ENCODE measurements at regions of chrX and their contacts with region 1.

Region 1: DNA sequence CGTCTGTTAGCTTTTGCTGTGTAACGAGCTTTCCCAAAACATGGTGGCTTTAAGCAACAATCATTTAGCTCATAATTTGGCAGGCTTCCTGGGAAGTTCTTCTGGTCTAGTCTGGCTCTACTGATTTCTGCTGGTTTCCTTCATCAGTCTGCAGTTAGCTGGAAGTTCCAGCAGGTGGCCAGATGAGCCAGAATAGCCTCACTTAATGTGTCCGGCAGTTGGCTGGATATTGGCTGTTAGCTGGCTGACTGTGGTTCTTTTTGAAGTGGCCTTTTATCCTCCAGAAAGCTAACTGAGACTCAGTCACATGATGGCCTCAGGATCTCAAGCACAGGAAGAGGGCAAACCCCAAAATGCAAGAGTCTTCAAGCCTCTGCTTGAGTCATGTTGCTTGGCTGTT is 34.9 kb downstream of the FTHL17 start:
- DNase-seq: peak; percentile 42
- ATAC-seq: peak; percentile 86
- H3K4me3 ChIP-seq: no peak overlapping the region
- H3K27ac ChIP-seq: no peak overlapping the region
- H3K4me1 ChIP-seq: no peaks in the 10 kb centered on the region
- H3K27me3 ChIP-seq: no peaks in the 10 kb centered on the region
- CTCF ChIP-seq: peak; percentile 61
- POLR2A ChIP-seq: no peak
- RAD21 ChIP-seq: peak; percentile 61

Region 2: DNA sequence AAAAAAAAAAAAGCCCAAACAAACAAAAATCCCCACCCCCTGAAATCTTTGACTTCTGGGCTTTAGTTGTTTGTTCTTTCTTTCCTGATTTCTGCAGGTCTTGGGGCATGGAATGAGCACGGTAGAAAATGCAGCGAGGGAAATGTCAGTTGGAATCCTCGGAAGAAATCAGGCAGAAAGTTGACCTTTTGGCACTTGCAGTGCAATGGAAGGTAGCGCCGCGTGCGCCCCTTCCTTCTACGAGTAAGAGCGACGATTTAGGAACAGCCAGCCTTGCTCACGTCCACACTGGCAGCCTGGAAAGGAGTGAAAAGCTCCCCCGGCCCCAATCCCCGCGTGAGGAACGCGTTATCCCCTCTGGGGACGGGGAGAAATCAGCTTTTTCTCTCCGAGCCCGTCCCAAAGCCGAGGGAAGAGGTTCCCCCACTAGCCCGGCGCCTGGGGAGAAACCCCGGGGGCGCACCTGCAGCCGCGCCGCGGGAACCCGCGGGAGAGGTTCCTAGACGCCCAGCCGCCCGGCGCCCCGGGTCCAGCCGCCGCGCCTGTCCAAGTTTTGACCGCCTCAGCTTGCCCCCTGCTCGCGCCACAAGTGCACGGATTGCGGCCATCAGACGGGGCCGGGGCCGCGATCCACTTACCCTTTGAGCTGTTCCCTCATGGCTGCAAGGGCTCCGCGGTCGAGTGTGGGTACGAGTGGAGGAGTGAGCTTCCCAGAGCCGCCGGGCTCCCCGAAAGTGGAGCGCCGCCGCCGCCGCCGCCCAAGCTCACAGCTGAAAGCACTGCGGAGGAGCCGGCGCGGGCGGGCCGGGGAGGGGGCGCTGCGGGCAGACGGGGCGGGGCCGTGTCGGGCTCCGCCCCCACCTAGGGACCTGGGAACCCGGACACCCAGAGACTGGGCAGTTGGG is 229.5 kb after region 1 on chrX:
- CTCF ChIA-PET with region 1: interaction called, 3 read pairs
- POLR2A ChIA-PET with region 1: no interaction called
- dilution Hi-C with region 1: no loop called
- in situ Hi-C with region 1: no loop called
- intact Hi-C with region 1: loop called (anchors 5 kb)
- DNase-seq: no peak
- ATAC-seq: peak; percentile 94
- H3K4me3 ChIP-seq: peak overlapping the region; percentile 99
- H3K27ac ChIP-seq: peak overlapping the region; percentile 69; the same call in 1 of the 2 replicates
- H3K4me1 ChIP-seq: no peaks in the 10 kb centered on the region
- H3K27me3 ChIP-seq: peaks cover 3% of the 10 kb centered on the region
- CTCF ChIP-seq: no peak
- POLR2A ChIP-seq: no peak
- RAD21 ChIP-seq: no peak

Region 3: DNA sequence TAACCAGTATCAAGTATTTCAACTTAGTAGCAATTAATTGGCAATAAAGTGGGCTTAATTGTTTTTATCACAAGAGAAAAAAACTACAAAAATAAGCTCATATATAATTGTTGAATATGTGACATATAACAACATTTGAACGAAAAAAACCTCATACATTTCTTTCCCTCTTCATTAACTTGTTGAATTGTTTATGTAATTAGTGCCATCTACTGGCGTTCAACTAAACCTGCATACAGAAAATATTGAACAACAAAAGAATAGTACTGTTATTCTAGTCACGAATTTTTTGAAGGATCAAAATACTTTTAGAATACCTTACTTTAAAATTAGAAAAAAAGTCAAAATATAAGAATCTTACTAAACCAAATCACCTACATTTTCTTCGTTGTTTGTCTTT is 621.5 kb after region 1 on chrX:
- CTCF ChIA-PET with region 1: interaction called, 9 read pairs
- POLR2A ChIA-PET with region 1: no interaction called
- dilution Hi-C with region 1: no loop called
- in situ Hi-C with region 1: no loop called
- intact Hi-C with region 1: loop called (anchors 1 kb)
- DNase-seq: peak; percentile 49
- ATAC-seq: no peak
- H3K4me3 ChIP-seq: no peak overlapping the region
- H3K27ac ChIP-seq: no peak overlapping the region
- H3K4me1 ChIP-seq: no peaks in the 10 kb centered on the region
- H3K27me3 ChIP-seq: no peaks in the 10 kb centered on the region; the same call in 1 of the 2 replicates
- CTCF ChIP-seq: peak; percentile 63
- POLR2A ChIP-seq: no peak
- RAD21 ChIP-seq: peak; percentile 67

Region 4: GRCh38 chrX:31665454-31665853 is 628.6 kb after region 1 on chrX:
- CTCF ChIA-PET with region 1: interaction called, 3 read pairs
- POLR2A ChIA-PET with region 1: no interaction called
- dilution Hi-C with region 1: no loop called
- in situ Hi-C with region 1: loop called (anchors 5 kb)
- intact Hi-C with region 1: no loop called
- DNase-seq: no peak
- ATAC-seq: no peak
- H3K4me3 ChIP-seq: no peak overlapping the region
- H3K27ac ChIP-seq: no peak overlapping the region
- H3K4me1 ChIP-seq: no peaks in the 10 kb centered on the region
- H3K27me3 ChIP-seq: no peaks in the 10 kb centered on the region; the same call in 1 of the 2 replicates
- CTCF ChIP-seq: no peak
- POLR2A ChIP-seq: no peak
- RAD21 ChIP-seq: no peak